Right ventricle myocardium superior (tissue), 1 donor: ENCODE measurements at regions of chr2 and their contacts with region 1.

Region 1: DNA sequence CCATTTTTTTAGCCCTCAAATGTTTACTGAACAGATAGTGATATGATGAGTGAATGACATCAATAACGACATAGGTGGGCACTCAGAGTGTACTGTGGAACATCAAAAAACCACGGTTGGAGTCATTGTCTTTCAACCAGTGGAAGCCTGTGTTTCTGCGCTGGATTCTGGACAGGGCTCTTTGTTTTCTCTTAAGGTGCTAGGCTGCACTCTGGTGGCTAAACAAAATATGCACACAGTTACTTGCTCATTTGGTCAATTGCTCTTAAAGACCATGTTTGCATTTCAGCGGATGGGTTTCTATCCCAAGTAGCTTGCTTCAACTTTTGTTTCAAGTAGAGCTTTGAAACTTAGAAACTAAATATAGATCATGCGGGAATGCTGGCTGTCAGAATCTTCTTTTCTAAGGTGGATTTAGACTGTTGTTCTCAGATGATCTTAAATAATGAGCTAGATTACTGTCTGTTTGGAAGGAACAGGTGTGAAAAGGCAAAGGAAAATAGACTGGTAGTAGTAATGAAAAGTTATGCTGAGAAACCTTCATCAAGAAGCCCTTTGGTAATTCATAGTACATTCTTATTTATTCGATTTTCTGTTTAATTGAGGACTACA is 48.5 kb upstream of the LYPD6B start:
- DNase-seq: no peak
- ATAC-seq: peak; percentile 90

Region 2: GRCh38 chr2:147937744-147938349 is 1052.1 kb before region 1 on chr2:
- intact Hi-C with region 1: loop called (anchors 5 kb)
- DNase-seq: no peak
- ATAC-seq: peak; percentile 81

Region 3: GRCh38 chr2:148565272-148565894 is 424.6 kb before region 1 on chr2:
- intact Hi-C with region 1: loop called (anchors 5 kb)
- DNase-seq: no peak
- ATAC-seq: peak; percentile 64

Region 4: DNA sequence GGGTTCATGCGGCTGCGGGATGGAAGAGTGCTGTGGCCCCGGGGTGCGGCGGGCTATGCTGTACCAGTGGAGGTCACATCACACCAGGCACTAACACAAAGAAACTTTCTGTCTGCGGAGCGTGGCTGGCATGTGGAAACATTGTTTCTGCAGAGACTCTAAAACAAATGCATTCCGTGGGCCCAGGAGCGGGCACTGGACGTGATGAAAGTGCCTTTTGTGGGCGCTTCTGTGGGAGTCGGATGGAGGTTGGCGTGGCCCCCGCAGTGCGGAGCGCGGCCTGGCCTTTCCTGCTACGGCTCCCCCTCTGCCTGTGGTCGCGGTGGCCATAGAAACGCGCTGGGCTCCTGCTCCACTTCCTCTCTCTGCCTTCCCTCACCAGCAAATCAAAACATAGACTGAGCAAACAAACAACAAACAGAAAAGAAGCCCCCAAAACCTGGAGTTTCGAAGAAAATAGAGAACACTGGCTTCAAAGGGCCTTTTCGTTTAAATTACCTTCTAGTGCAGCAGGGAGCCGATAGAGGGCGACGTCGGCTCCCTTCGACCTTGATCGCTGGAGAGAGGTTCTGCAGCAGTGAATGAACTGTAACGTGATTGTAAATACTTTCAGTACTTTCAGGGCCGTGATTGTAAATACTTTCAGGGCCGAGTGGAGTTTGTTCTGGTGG is 63.6 kb before region 1 on chr2:
- intact Hi-C with region 1: loop called (anchors 2 kb)
- DNase-seq: peak; percentile 54
- ATAC-seq: peak; percentile 81